Endothelial cell of umbilical vein (primary cell): ENCODE measurements at regions of chr12 and their contacts with region 1.

Region 1: GRCh38 chr12:51083126-51083833 is at the start of gene CSRNP2:
- DNase-seq: peak; percentile 94
- H3K4me3 ChIP-seq: peak within 1 kb of the TSS; percentile 77 to 98 (median 78)
- H3K27ac ChIP-seq: peak within 1 kb of the TSS; percentile 64
- H3K4me1 ChIP-seq: peaks cover 12% of the 10 kb centered on the region
- H3K27me3 ChIP-seq: no peaks in the 10 kb centered on the region
- CTCF ChIP-seq: peak in 1 of 2 donors; percentile 19
- POLR2A ChIP-seq: peak; percentile 100
- total RNA-seq, gene CSRNP2: 42.1 and 49.7 TPM in 2 replicates

Region 2: GRCh38 chr12:50887191-50887590 is 196.1 kb before region 1 on chr12:
- CTCF ChIA-PET with region 1: no interaction called
- POLR2A ChIA-PET with region 1: no interaction called
- dilution Hi-C with region 1: no loop called
- intact Hi-C with region 1: no loop called
- DNase-seq: no peak
- H3K4me3 ChIP-seq: no peak overlapping the region
- H3K27ac ChIP-seq: no peak overlapping the region
- H3K4me1 ChIP-seq: no peaks in the 10 kb centered on the region
- H3K27me3 ChIP-seq: no peaks in the 10 kb centered on the region
- CTCF ChIP-seq: no peak
- POLR2A ChIP-seq: no peak

Region 3: DNA sequence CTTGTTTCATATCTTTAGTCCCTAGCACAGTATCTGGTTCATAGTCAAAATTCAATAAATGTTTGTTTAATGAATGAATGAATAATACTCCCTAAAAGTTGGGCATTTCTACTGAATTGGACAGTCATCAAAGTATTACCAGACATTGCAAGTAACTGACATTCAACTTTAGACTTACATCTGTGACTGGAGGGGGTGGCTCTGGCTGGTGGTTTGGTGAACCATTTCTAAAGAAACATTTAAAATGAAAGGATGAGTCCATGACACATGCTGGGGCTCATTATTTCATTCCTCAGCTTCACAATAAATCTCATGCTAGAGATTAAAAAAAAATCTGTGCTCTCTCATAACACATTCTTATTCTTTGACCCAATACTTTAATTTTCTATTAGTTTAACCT is 20.7 kb after region 1 on chr12:
- CTCF ChIA-PET with region 1: no interaction called
- POLR2A ChIA-PET with region 1: interaction called, 11 read pairs
- dilution Hi-C with region 1: no loop called
- intact Hi-C with region 1: no loop called
- DNase-seq: no peak
- H3K4me3 ChIP-seq: no peak overlapping the region
- H3K27ac ChIP-seq: no peak overlapping the region
- H3K4me1 ChIP-seq: no peaks in the 10 kb centered on the region
- H3K27me3 ChIP-seq: no peaks in the 10 kb centered on the region
- CTCF ChIP-seq: no peak
- POLR2A ChIP-seq: no peak

Region 4: GRCh38 chr12:51238510-51239334 is 155.4 kb after region 1 on chr12 and contains the start of gene DAZAP2:
- CTCF ChIA-PET with region 1: no interaction called
- POLR2A ChIA-PET with region 1: interaction called, 3 read pairs
- dilution Hi-C with region 1: no loop called
- intact Hi-C with region 1: loop called (anchors 2 kb)
- DNase-seq: peak; percentile 96
- H3K4me3 ChIP-seq: peak within 1 kb of the TSS; percentile 11 to 97 (median 66)
- H3K27ac ChIP-seq: peak within 1 kb of the TSS; percentile 85
- H3K4me1 ChIP-seq: peaks cover 12% of the 10 kb centered on the region
- H3K27me3 ChIP-seq: no peaks in the 10 kb centered on the region
- CTCF ChIP-seq: peak in 1 of 2 donors; percentile 31
- POLR2A ChIP-seq: peak; percentile 93
- total RNA-seq, gene DAZAP2: 177 TPM in 2 replicates

Region 5: GRCh38 chr12:51270067-51270970 is 187.0 kb after region 1 on chr12 and contains the start of gene SMAGP:
- CTCF ChIA-PET with region 1: interaction called, 4 read pairs
- POLR2A ChIA-PET with region 1: no interaction called
- dilution Hi-C with region 1: no loop called
- intact Hi-C with region 1: loop called (anchors 2 kb)
- DNase-seq: peak; percentile 26
- H3K4me3 ChIP-seq: peak within 1 kb of the TSS; percentile 45 to 92 (median 76)
- H3K27ac ChIP-seq: peak within 1 kb of the TSS; percentile 65
- H3K4me1 ChIP-seq: peaks cover 19% of the 10 kb centered on the region
- H3K27me3 ChIP-seq: no peaks in the 10 kb centered on the region
- CTCF ChIP-seq: no peak
- POLR2A ChIP-seq: no peak
- total RNA-seq, gene SMAGP: 26.2 and 29.1 TPM in 2 replicates